ENCODE measurements at regions of chr1 and their contacts with region 1.

Region 1: GRCh38 chr1:65840683-65841082 is 48.0 kb downstream of the PDE4B start:
- DNase-seq: no peak
- H3K4me3 Mint-ChIP-seq: no peak overlapping the region
- H3K27ac Mint-ChIP-seq: no peak overlapping the region
- H3K4me1 Mint-ChIP-seq: no peaks in the 10 kb centered on the region
- H3K27me3 Mint-ChIP-seq: no peaks in the 10 kb centered on the region
- CTCF ChIP-seq: no peak

Region 2: GRCh38 chr1:65717815-65718454 is 122.7 kb before region 1 on chr1:
- CTCF ChIA-PET with region 1: interaction called, 10 read pairs
- intact Hi-C with region 1: no loop called
- DNase-seq: peak; percentile 21
- H3K4me3 Mint-ChIP-seq: no peak overlapping the region
- H3K27ac Mint-ChIP-seq: no peak overlapping the region
- H3K4me1 Mint-ChIP-seq: no peaks in the 10 kb centered on the region
- H3K27me3 Mint-ChIP-seq: peaks cover 16% of the 10 kb centered on the region
- CTCF ChIP-seq: no peak

Measured in Calu3 (cell line).